A549 (cell line): ENCODE measurements at regions of chr2 and their contacts with region 1.

Region 1: GRCh38 chr2:71226965-71227560 is at the start of gene PAIP2B:
- DNase-seq: peak; percentile 93 to 100
- ATAC-seq: peak; percentile 94 to 96
- H3K4me3 ChIP-seq: peak within 1 kb of the TSS; percentile 90
- H3K27ac ChIP-seq: peak within 1 kb of the TSS; percentile 65 to 87
- H3K4me1 ChIP-seq: peaks cover 5% of the 10 kb centered on the region; the same call in 1 of the 3 replicates
- CTCF ChIP-seq: no peak; the same call in 2 of the 3 replicates
- EP300 ChIP-seq: no peak
- POLR2A ChIP-seq: peak; percentile 42
- RAD21 ChIP-seq: no peak
- polyA plus RNA-seq, gene PAIP2B: 0.84 and 0.94 TPM in 2 replicates

Region 2: DNA sequence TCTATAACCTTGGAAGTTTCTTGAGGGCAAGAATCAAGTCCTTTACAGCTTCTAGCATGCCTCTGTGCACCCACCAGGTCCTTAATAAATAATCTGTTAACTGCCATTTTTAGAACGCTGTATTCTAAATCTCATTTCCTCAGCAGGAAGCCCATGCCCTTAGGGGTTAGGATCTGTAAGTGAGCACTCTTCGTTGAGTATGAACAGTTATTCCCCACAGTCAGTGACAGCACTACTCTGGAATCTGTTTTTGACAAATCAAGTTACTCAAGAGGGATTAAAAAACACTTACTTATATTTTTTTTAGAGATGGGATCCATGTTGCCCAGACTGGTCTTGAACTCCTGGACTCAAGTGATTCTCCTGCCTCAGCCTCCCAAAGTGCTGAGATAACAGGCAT is 14.7 kb before region 1 on chr2:
- CTCF ChIA-PET with region 1: interaction called, 15 read pairs
- POLR2A ChIA-PET with region 1: no interaction called
- DNase-seq: no peak
- ATAC-seq: no peak
- H3K4me3 ChIP-seq: no peak overlapping the region
- H3K27ac ChIP-seq: no peak overlapping the region
- H3K4me1 ChIP-seq: no peaks in the 10 kb centered on the region
- CTCF ChIP-seq: no peak
- EP300 ChIP-seq: no peak
- POLR2A ChIP-seq: no peak
- RAD21 ChIP-seq: no peak

Region 3: GRCh38 chr2:71276311-71277146 is 49.5 kb after region 1 on chr2:
- CTCF ChIA-PET with region 1: interaction called, 25 read pairs
- POLR2A ChIA-PET with region 1: interaction called, 7 read pairs
- DNase-seq: peak; percentile 89 to 93
- ATAC-seq: peak; percentile 96 to 98
- H3K4me3 ChIP-seq: peak overlapping the region; percentile 50
- H3K27ac ChIP-seq: peak overlapping the region; percentile 64 to 83
- H3K4me1 ChIP-seq: peaks cover 5% of the 10 kb centered on the region; the same call in 1 of the 3 replicates
- CTCF ChIP-seq: no peak
- EP300 ChIP-seq: no peak
- POLR2A ChIP-seq: peak; percentile 75
- RAD21 ChIP-seq: no peak

Region 4: DNA sequence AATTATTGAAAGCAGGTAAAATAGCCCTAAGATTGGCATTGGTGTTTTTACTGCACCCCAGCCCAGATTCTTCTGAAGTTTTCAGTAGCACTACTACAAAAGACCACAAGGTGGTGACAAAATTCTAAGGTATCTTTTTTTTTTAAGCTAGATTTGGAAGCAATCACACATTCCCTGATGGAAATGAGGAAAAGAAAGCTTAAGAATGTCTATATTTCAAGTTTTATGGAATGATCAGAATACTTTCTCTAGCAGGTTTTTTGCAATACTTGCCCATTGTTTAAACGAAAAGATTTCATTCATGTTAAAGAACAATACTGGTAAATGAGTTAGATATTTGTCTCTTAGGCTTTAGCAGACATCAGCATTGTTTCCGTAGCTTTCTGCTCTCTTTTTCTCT is 72.4 kb after region 1 on chr2:
- CTCF ChIA-PET with region 1: interaction called, 13 read pairs
- POLR2A ChIA-PET with region 1: no interaction called
- DNase-seq: peak; percentile 39 to 41
- ATAC-seq: peak; percentile 71 to 74; a peak in 5 of 6 replicates
- H3K4me3 ChIP-seq: no peak overlapping the region
- H3K27ac ChIP-seq: no peak overlapping the region
- H3K4me1 ChIP-seq: no peaks in the 10 kb centered on the region
- CTCF ChIP-seq: peak; percentile 90
- EP300 ChIP-seq: no peak
- POLR2A ChIP-seq: no peak
- RAD21 ChIP-seq: peak; percentile 80 to 83

Region 5: GRCh38 chr2:71477231-71477691 is 250.2 kb after region 1 on chr2:
- CTCF ChIA-PET with region 1: no interaction called
- POLR2A ChIA-PET with region 1: no interaction called
- DNase-seq: no peak
- ATAC-seq: no peak
- H3K4me3 ChIP-seq: no peak overlapping the region
- H3K27ac ChIP-seq: no peak overlapping the region
- H3K4me1 ChIP-seq: no peaks in the 10 kb centered on the region
- CTCF ChIP-seq: no peak
- EP300 ChIP-seq: no peak
- POLR2A ChIP-seq: no peak
- RAD21 ChIP-seq: no peak

Region 6: GRCh38 chr2:71596011-71596410 is 368.9 kb after region 1 on chr2:
- CTCF ChIA-PET with region 1: no interaction called
- POLR2A ChIA-PET with region 1: no interaction called
- DNase-seq: no peak
- ATAC-seq: no peak
- H3K4me3 ChIP-seq: no peak overlapping the region
- H3K27ac ChIP-seq: no peak overlapping the region
- H3K4me1 ChIP-seq: no peaks in the 10 kb centered on the region
- CTCF ChIP-seq: no peak
- EP300 ChIP-seq: no peak
- POLR2A ChIP-seq: no peak
- RAD21 ChIP-seq: no peak